ENCODE measurements at regions of chr19 and their contacts with region 1.

Region 1: DNA sequence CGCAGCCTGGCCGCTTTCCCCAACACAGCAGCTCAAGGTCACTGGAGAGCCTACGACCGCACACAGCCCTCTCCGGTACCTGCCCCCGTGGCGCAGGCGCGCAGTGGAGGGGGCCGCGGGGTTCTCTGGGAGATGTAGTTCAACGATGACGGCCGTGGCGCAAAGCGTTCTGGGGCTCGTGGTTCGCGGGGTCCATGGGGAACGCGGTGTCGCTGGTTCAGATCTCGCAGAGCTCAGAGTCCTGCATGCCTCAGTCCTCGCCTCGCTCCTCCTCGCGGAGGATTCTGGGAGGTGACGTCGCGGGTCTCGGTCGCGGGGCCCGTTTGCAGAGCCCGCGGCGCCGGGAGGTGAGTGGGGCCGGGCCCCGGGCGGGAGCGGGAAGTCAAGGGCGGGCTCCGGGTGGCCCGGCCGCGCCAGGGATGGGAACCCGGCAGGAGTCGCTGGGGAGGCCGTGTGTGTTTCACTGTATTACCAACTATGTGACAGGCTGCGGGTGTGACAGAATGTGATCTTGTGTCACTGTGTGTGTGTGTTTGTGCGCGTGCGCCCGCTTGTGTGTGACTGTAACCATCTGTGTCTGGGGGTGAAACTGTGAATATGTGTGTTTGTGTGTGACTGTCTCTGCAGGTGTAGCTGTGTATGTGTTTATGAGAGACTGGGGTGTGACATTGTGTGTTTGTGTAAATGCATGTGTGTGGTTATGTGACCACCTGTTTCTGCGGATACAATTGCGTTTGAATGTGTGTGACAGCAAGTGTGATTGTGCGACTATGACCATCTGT is at the start of gene ZNF527:
- DNase-seq: peak; percentile 94 to 98 (median 97)
- ATAC-seq: peak; percentile 92
- H3K4me3 ChIP-seq: peak within 1 kb of the TSS; percentile 80 to 95
- H3K4me3 Mint-ChIP-seq: peak within 1 kb of the TSS; percentile 99
- H3K27ac ChIP-seq: peak within 1 kb of the TSS; percentile 82 to 90
- H3K27ac Mint-ChIP-seq: peak within 1 kb of the TSS; percentile 96
- H3K4me1 ChIP-seq: peaks cover 7% of the 10 kb centered on the region
- H3K4me1 Mint-ChIP-seq: peaks cover 20% of the 10 kb centered on the region
- H3K27me3 ChIP-seq: no peaks in the 10 kb centered on the region
- H3K27me3 Mint-ChIP-seq: no peaks in the 10 kb centered on the region
- CTCF ChIP-seq: no peak
- total RNA-seq, gene ZNF527: 12.9 to 14.2 TPM

Region 2: DNA sequence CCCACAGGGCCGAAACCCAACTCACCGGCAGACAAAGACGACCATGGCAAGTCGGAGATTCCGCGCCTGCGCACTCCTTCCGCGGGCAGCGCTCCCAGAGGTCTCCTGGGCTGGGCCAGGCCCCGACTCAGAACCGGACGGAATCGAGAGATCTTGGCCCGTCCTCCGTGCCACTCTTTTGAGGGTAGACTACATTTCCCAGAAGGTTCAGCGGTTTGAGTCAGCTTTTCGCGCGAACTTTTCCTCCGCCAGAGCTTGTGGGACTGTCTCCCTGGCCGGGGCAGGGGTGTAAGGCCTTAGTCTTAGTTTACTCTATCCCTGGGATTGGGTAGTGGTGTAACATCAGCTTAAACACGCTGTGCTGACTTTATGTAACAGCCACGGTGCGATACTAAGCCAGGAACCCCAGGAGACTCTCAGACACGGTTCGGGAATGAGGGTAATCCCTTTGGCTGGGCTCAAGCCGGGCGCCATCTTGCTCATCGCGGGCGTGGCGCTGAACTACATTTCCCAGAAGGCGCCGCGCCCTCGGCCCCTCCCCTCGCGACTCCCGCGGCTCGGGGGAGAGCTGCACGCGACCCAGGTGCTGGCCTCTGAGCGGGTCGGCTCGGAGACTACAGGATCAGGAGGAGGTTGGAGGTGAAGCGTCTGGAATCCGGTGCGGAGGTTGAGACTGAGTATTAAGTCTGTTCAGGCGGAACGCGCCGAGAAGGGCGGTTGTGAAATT is 842.7 kb before region 1 on chr19 and contains the start of gene ZNF260:
- CTCF ChIA-PET with region 1: no interaction called
- POLR2A ChIA-PET with region 1: no interaction called
- intact Hi-C with region 1: loop called in 1 of 2 experiments (anchors 1 kb)
- DNase-seq: peak; percentile 77 to 96 (median 92)
- ATAC-seq: peak; percentile 90
- H3K4me3 ChIP-seq: peak within 1 kb of the TSS; percentile 64 to 85
- H3K4me3 Mint-ChIP-seq: peak within 1 kb of the TSS; percentile 99
- H3K27ac ChIP-seq: peak within 1 kb of the TSS; percentile 52 to 84
- H3K27ac Mint-ChIP-seq: peak within 1 kb of the TSS; percentile 96
- H3K4me1 ChIP-seq: peaks cover 21% of the 10 kb centered on the region
- H3K4me1 Mint-ChIP-seq: peaks cover 28% of the 10 kb centered on the region
- H3K27me3 ChIP-seq: no peaks in the 10 kb centered on the region
- H3K27me3 Mint-ChIP-seq: no peaks in the 10 kb centered on the region
- CTCF ChIP-seq: no peak
- total RNA-seq, gene ZNF260: 2.8 to 4.6 TPM

Region 3: DNA sequence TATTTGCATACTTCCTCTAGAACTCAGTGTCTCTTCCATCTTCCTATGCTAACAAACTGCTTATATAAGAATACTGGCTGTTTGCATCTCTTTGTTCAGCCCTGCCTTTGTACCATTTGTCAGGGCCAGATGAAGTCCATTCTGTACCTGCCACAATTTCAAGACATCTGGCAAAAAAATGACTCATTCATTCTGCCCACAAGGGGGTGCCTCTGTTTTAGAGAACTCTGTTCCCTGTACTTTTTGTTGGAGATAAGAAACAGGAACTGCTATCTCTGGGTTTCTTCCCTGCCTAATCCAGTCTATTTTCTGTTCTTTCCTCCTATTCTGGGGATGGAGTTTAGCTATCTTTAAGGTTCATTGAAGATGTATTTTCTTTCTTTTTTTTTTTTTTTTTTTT is 431.9 kb before region 1 on chr19:
- CTCF ChIA-PET with region 1: no interaction called
- POLR2A ChIA-PET with region 1: no interaction called
- intact Hi-C with region 1: no loop called
- DNase-seq: no peak
- ATAC-seq: no peak
- H3K4me3 ChIP-seq: no peak overlapping the region
- H3K4me3 Mint-ChIP-seq: no peak overlapping the region
- H3K27ac ChIP-seq: no peak overlapping the region
- H3K27ac Mint-ChIP-seq: no peak overlapping the region
- H3K4me1 ChIP-seq: no peaks in the 10 kb centered on the region
- H3K4me1 Mint-ChIP-seq: no peaks in the 10 kb centered on the region
- H3K27me3 ChIP-seq: no peaks in the 10 kb centered on the region
- H3K27me3 Mint-ChIP-seq: no peaks in the 10 kb centered on the region
- CTCF ChIP-seq: no peak

Region 4: DNA sequence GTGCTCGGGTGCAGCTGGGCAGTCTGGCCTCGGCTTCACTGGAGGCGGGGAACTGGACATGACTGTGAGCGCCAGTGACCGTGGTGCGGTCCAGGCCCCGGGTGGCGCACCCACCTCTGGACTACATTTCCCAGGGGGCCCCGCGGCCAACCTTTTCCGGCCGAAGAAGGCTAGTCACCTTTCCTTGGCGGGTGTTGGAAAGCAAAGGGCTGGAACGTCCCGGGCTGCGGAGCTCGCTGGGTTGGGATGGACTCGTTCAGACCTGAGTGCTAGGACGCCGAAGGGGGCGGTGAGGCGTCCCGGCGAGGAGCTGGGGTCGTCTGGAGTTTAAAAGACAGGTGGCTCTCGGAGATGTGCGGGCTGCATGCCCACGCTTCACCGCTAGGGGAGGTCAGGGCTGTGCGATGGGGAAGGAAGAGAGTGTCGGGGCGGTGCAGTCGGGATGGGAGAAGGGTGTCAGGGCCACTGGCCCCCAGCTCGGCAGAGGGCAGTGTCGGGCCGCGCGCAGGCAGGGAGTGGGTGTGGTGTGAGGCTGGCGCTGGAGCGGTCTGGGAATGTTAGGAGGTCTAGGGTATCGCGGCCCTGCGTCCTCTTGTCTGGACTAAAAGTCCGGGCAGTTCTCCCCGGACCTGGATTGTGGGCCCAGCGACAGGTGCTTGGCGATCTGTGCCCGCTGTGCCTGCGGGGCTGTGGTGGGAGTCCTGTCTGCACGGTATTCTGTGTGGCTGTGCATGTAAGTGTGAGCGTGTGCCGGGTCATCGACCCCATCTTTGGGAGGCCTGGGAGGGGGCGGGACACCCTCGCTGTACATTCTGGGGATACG is 397.8 kb before region 1 on chr19:
- CTCF ChIA-PET with region 1: no interaction called
- POLR2A ChIA-PET with region 1: no interaction called
- intact Hi-C with region 1: loop called in 1 of 2 experiments (anchors 2 kb)
- DNase-seq: peak; percentile 49 to 92 (median 77)
- ATAC-seq: peak; percentile 90
- H3K4me3 ChIP-seq: peak overlapping the region; percentile 59 to 100
- H3K4me3 Mint-ChIP-seq: peak overlapping the region; percentile 90
- H3K27ac ChIP-seq: peak overlapping the region; percentile 53 to 66
- H3K27ac Mint-ChIP-seq: peak overlapping the region; percentile 88
- H3K4me1 ChIP-seq: peaks cover 15% of the 10 kb centered on the region
- H3K4me1 Mint-ChIP-seq: peaks cover 24% of the 10 kb centered on the region
- H3K27me3 ChIP-seq: no peaks in the 10 kb centered on the region
- H3K27me3 Mint-ChIP-seq: no peaks in the 10 kb centered on the region
- CTCF ChIP-seq: no peak

Region 5: DNA sequence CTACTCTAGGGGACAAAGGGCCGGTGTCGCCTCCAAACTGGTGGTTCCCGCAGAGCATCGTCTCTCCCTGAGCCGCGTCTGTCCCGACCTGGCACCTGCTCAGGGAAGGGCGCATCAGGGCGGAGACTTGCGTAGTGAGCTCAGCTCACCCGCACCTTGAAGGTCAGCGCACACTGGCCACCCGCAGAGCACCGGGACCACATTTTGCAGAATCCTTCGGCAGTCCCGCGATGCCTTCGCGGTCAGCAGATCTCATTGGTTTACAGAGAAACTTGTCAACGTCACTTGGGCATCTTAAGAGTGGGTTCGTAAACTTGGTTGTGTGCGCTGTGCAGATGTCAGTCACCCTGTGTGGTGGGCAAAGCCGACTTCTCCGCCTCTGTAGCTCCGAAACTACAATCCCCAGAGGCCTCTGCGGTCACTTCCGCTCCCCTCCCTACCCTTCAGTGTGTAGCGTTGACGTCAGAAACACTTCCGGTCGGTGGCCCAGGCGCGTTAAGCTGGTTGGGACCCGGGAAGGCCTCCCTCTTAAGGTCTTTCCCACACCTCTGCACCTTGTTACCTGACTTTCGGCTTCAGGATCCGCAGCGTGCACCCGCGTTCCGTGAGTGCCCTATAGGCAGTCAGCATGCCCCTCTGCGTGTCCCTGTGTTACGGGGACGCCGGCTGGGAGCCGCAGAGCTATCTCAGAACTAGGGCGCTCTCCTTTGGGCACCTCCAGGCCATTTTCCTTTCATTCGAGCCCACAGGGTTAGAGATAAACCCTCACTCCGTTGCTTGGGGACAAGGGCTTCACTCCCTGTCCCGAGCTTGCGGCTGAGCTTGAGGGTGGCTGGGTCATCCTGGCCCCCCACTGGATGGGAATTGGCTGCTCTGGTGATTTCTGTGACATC is 36.6 kb before region 1 on chr19:
- CTCF ChIA-PET with region 1: no interaction called
- POLR2A ChIA-PET with region 1: interaction called, 9 read pairs
- intact Hi-C with region 1: loop called (anchors 1 kb)
- DNase-seq: peak; percentile 75 to 96 (median 87)
- ATAC-seq: peak; percentile 97
- H3K4me3 ChIP-seq: peak overlapping the region; percentile 46 to 74
- H3K4me3 Mint-ChIP-seq: peak overlapping the region; percentile 96
- H3K27ac ChIP-seq: peak overlapping the region; percentile 46 to 87
- H3K27ac Mint-ChIP-seq: peak overlapping the region; percentile 95
- H3K4me1 ChIP-seq: peaks cover 10% of the 10 kb centered on the region
- H3K4me1 Mint-ChIP-seq: peaks cover 47% of the 10 kb centered on the region
- H3K27me3 ChIP-seq: no peaks in the 10 kb centered on the region
- H3K27me3 Mint-ChIP-seq: no peaks in the 10 kb centered on the region
- CTCF ChIP-seq: no peak

Region 6: GRCh38 chr19:37655689-37656371 is 284.8 kb after region 1 on chr19:
- CTCF ChIA-PET with region 1: no interaction called
- POLR2A ChIA-PET with region 1: no interaction called
- intact Hi-C with region 1: loop called in 1 of 2 experiments (anchors 2 kb)
- DNase-seq: peak; percentile 60 to 90 (median 86)
- ATAC-seq: peak; percentile 76
- H3K4me3 ChIP-seq: peak overlapping the region; percentile 74 to 81
- H3K4me3 Mint-ChIP-seq: peak overlapping the region; percentile 95
- H3K27ac ChIP-seq: peak overlapping the region; percentile 85 to 92
- H3K27ac Mint-ChIP-seq: peak overlapping the region; percentile 96
- H3K4me1 ChIP-seq: peaks cover 12% of the 10 kb centered on the region
- H3K4me1 Mint-ChIP-seq: peaks cover 38% of the 10 kb centered on the region
- H3K27me3 ChIP-seq: no peaks in the 10 kb centered on the region
- H3K27me3 Mint-ChIP-seq: no peaks in the 10 kb centered on the region
- CTCF ChIP-seq: no peak